Activated B cell treated with CpG ODN at 0.5 μM for 24 hours (primary cell): ENCODE measurements at regions of chr13 and their contacts with region 1.

Region 1: DNA sequence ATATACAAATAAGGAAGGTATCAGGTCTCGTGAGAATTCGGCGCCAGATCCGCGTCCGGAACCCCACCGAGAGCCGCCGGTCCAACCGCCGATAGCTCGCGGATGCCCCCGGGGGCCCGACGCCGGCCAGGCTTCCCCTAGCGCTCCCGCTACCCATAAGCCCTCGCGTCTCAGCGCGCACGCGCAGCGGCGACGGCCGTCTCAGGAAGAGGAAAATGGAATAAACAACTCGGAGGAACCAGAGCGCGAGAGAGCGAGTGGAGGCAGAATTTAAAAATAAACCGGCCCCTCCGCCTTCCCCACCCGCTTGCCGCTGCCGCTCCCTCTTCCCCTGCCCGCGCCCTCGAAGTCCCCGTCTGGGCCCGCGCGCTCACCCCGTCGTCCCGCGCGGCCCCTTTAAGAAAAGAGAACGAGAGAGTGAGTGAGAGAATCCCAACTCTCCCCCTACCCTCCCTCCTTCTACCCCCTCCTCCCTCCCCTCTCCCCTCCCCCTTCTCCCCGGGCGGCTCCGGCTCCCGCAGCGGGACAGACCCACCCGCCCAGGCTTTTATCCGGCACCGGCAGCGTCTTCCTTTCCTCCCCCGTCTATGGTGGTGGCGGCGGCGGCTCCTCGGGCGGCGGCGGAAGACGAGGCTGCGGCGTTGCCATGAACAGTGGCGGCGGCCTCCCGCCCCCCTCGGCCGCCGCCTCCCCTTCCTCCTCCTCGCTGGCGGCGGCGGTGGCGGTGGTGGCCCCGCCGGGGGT is at the start of gene PAN3:
- DNase-seq: peak; percentile 95
- ATAC-seq: peak; percentile 67
- H3K4me3 Mint-ChIP-seq: peak within 1 kb of the TSS; percentile 95
- H3K27ac Mint-ChIP-seq: peak within 1 kb of the TSS; percentile 98
- H3K4me1 Mint-ChIP-seq: peaks cover 53% of the 10 kb centered on the region
- H3K27me3 Mint-ChIP-seq: no peaks in the 10 kb centered on the region
- CTCF ChIP-seq: no peak
- total RNA-seq, gene PAN3: 60.7 and 68.2 TPM in 2 replicates

Region 2: GRCh38 chr13:27251166-27252091 is 886.8 kb before region 1 on chr13 and contains the start of gene RPL21:
- CTCF ChIA-PET with region 1: no interaction called
- POLR2A ChIA-PET with region 1: no interaction called
- intact Hi-C with region 1: loop called (anchors 2 kb)
- DNase-seq: peak; percentile 89
- ATAC-seq: peak; percentile 93
- H3K4me3 Mint-ChIP-seq: peak within 1 kb of the TSS; percentile 93
- H3K27ac Mint-ChIP-seq: peak within 1 kb of the TSS; percentile 99
- H3K4me1 Mint-ChIP-seq: peaks cover 48% of the 10 kb centered on the region
- H3K27me3 Mint-ChIP-seq: no peaks in the 10 kb centered on the region
- CTCF ChIP-seq: no peak
- total RNA-seq, gene RPL21: 1,996 and 2,528 TPM in 2 replicates

Region 3: GRCh38 chr13:27620377-27621115 is 517.6 kb before region 1 on chr13 and contains the start of gene LNX2:
- CTCF ChIA-PET with region 1: no interaction called
- POLR2A ChIA-PET with region 1: interaction called, 8 read pairs
- intact Hi-C with region 1: loop called (anchors 1 kb)
- DNase-seq: peak; percentile 97
- ATAC-seq: peak; percentile 87
- H3K4me3 Mint-ChIP-seq: peak within 1 kb of the TSS; percentile 93
- H3K27ac Mint-ChIP-seq: peak within 1 kb of the TSS; percentile 93
- H3K4me1 Mint-ChIP-seq: peaks cover 54% of the 10 kb centered on the region
- H3K27me3 Mint-ChIP-seq: no peaks in the 10 kb centered on the region
- CTCF ChIP-seq: no peak
- total RNA-seq, gene LNX2: 6.1 and 7.1 TPM in 2 replicates

Region 4: GRCh38 chr13:28100150-28101121 is 37.7 kb before region 1 on chr13 and contains the start of gene FLT3:
- CTCF ChIA-PET with region 1: no interaction called
- POLR2A ChIA-PET with region 1: interaction called, 3 read pairs
- intact Hi-C with region 1: loop called (anchors 2 kb)
- DNase-seq: peak; percentile 48
- ATAC-seq: peak; percentile 73
- H3K4me3 Mint-ChIP-seq: peak within 1 kb of the TSS; percentile 81
- H3K27ac Mint-ChIP-seq: no peak within 1 kb of the TSS
- H3K4me1 Mint-ChIP-seq: peaks cover 8% of the 10 kb centered on the region
- H3K27me3 Mint-ChIP-seq: peaks cover 35% of the 10 kb centered on the region
- CTCF ChIP-seq: no peak
- total RNA-seq, gene FLT3: 0.07 and 0.12 TPM in 2 replicates

Region 5: DNA sequence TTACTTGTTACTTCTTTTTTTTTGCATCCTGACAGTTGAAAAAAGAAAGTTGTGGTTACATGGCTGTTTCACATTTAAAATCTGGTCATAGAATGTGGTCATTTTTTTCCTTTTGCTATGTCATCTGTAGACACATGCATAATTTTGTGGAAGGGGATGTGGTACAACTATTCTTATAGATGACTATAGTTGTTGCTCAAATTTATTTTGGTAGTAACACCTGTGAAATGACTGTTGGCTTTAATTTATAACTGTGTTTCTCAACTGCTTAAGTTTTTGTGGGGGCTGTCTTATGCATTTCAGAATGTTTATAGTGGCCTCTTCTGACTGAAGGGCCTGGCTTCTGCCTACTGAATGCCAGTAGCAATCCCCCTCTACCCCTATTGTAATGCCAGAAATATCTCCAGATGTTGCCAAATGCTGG is 130.6 kb after region 1 on chr13:
- CTCF ChIA-PET with region 1: no interaction called
- POLR2A ChIA-PET with region 1: no interaction called
- intact Hi-C with region 1: loop called (anchors 1 kb)
- DNase-seq: no peak
- ATAC-seq: peak; percentile 87
- H3K4me3 Mint-ChIP-seq: peak overlapping the region; percentile 41
- H3K27ac Mint-ChIP-seq: peak overlapping the region; percentile 78
- H3K4me1 Mint-ChIP-seq: peaks cover 29% of the 10 kb centered on the region
- H3K27me3 Mint-ChIP-seq: no peaks in the 10 kb centered on the region
- CTCF ChIP-seq: no peak

Region 6: DNA sequence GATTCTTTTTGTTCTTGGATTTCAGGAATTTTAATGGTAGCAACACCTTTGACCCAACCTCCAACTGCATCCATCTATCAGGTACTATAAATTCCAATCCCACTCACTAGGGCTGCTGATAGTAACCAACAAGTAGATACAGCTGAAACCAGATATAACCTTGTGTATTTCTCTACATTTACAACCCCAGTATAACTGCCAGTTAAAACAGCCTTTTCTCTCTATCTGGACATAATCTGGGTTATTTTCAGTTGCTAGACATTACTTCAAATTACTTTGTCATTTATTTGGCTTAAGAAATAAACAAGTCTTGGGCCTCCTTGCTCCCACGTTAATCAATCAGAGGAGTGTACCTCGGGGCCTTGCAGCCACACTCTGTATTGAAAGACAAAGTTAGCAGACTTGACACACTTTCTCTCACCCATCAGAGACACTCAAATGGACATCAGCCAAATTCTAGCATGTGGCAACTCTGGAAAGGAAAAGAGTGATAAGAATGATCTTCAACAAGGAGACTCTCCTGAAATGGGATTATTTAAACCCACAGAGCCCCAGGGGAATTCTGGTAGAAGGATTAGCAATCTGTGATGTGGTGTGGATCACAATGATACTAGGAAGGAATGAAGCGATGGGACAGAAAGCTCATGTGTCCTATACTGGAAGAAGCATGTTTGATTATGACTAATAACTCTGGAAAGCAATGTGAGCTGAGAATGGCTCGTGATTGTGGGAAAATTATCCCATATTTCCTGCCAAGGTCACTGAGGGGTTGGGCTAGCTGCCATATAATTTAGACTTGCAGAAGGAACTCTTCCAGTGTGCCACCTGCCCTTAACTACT is 199.2 kb after region 1 on chr13:
- CTCF ChIA-PET with region 1: no interaction called
- POLR2A ChIA-PET with region 1: no interaction called
- intact Hi-C with region 1: no loop called
- DNase-seq: no peak
- ATAC-seq: no peak
- H3K4me3 Mint-ChIP-seq: no peak overlapping the region
- H3K27ac Mint-ChIP-seq: no peak overlapping the region
- H3K4me1 Mint-ChIP-seq: no peaks in the 10 kb centered on the region
- H3K27me3 Mint-ChIP-seq: no peaks in the 10 kb centered on the region
- CTCF ChIP-seq: no peak

Region 7: GRCh38 chr13:28658796-28659620 is 520.8 kb after region 1 on chr13 and contains the start of gene POMP:
- CTCF ChIA-PET with region 1: no interaction called
- POLR2A ChIA-PET with region 1: interaction called, 18 read pairs
- intact Hi-C with region 1: loop called (anchors 1 kb)
- DNase-seq: peak; percentile 96
- ATAC-seq: peak; percentile 92
- H3K4me3 Mint-ChIP-seq: peak within 1 kb of the TSS; percentile 98
- H3K27ac Mint-ChIP-seq: peak within 1 kb of the TSS; percentile 93
- H3K4me1 Mint-ChIP-seq: peaks cover 62% of the 10 kb centered on the region
- H3K27me3 Mint-ChIP-seq: no peaks in the 10 kb centered on the region
- CTCF ChIP-seq: no peak
- total RNA-seq, gene POMP: 54.0 and 56.0 TPM in 2 replicates